ENCODE measurements at regions of chr17 and their contacts with region 1.

Region 1: GRCh38 chr17:8285270-8286181 is 2.9 kb upstream of the RANGRF start:
- DNase-seq: no peak
- H3K4me3 ChIP-seq: no peak overlapping the region
- H3K27ac ChIP-seq: no peak overlapping the region
- H3K4me1 ChIP-seq: peaks cover 11 to 18% (median 13%) of the 10 kb centered on the region in 4 donors
- H3K27me3 ChIP-seq: no peaks in the 10 kb centered on the region
- CTCF ChIP-seq: no peak
- EP300 ChIP-seq: no peak
- POLR2A ChIP-seq: no peak

Region 2: DNA sequence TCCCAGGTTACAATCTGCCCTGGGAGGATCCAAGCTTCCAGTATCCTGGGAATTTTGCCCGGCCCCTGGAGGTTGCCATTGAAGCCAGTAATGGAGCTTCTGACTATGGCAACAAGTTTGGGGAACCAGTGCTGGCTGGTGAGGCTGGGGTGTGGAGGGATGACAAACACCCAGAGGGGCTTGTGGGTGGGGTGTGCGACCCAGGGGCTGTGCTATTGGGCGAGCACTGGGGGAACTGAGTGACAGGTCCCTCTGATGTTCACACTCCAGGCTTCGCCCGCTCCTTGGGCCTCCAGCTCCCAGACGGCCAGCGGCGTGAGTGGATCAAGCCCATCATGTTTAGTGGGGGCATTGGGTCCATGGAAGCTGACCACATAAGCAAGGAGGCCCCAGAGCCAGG is 27.7 kb before region 1 on chr17:
- in situ Hi-C with region 1: no loop called
- intact Hi-C with region 1: loop called (anchors 2 kb)
- DNase-seq: no peak
- H3K4me3 ChIP-seq: no peak overlapping the region
- H3K27ac ChIP-seq: no peak overlapping the region
- H3K4me1 ChIP-seq: no peaks in the 10 kb centered on the region
- H3K27me3 ChIP-seq: no peaks in the 10 kb centered on the region
- CTCF ChIP-seq: no peak
- EP300 ChIP-seq: no peak
- POLR2A ChIP-seq: no peak

Region 3: GRCh38 chr17:8542599-8543502 is 257.3 kb after region 1 on chr17:
- in situ Hi-C with region 1: no loop called
- intact Hi-C with region 1: no loop called
- DNase-seq: peak; percentile 25
- H3K4me3 ChIP-seq: no peak overlapping the region
- H3K27ac ChIP-seq: no peak overlapping the region
- H3K4me1 ChIP-seq: peaks cover 0 to 4% (median 0%) of the 10 kb centered on the region in 4 donors
- H3K27me3 ChIP-seq: no peaks in the 10 kb centered on the region
- CTCF ChIP-seq: no peak
- EP300 ChIP-seq: no peak
- POLR2A ChIP-seq: no peak

Measured in transverse colon (tissue), 4 donors.